GM13976 (cell line): ENCODE measurements at regions of chrX and their contacts with region 1.

Region 1: DNA sequence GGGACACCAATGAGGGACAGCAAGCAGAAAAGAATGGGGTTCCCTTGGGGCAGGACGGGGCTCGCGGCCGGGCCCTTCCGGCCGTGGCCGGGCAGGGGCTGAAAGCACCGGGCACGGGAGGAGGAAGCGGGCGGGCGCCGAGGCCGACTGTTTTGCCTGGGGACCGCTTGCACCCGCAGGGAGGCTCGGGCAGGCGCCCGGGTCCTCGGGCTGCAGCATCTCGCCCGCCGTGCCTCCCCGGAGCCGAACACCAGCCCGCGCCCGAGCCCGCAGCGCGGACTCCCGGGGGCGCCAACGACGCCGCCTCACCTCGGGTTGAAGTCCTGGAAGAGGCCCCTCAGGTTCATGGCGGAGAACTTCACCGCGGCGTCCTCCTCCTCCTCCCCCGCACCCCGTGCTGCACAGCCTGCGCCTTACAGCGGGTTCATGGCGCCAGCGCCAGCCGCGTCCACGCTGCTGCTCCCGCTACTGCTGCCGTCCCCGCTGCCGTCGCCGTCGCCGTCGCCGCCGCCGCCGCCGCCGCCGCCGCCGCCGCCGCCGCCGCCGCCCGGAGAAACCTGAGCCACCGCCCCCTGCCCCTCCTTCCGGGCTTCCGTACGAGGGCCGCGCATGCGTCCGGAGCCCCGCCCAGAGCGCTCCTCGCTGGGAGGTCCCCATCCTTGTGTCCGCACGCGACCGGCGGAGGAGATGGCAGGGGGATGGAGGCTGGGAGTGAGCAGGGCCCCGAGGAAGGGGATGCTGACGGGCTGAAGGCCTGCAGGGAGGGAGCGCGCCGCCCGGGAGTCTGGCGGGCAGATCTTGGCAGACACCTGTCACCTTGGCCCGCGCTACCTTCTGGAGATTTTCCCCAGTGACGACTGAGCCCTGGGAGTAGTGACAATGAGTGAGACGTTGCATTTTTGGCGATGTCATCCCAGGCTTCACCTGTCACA is at the start of gene TMEM185A:
- DNase-seq: peak; percentile 85
- CTCF ChIP-seq: no peak

Region 2: DNA sequence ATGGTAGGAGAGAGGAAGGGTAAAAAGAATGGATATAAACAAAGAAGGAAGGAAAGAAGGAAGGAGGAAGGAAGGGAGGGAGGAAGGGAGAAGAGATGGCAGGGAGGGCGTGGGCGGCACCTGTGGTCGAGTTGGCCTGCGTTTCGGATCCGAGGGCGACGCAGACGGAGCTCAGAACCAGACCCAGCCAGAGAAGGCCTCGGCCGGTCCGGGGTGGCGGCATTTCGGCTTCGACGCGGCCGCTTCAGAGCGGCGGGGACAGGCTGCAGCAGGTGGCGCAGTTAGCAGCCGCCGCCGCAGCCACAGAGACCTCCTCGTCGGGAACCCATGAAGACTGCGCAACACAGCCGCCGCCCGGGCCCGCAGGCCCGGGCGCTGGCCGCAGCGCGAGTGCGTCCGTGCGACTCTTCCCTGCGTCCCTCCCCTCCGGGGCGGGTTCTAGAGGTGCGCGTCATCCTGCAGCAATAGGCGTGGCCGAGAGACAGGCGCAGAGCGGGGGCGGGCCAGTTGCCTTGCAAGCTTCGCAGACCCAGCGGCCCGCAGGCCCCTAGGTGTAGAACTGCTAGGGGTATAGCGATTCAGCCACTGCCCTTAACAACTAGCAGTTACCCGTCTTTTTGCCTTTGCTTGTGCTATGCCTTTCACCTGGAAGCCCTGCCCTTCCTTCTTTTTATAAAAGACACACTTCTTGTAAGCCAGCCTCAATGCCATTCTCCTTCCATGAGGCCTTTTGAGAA is 126.4 kb before region 1 on chrX and contains the start of gene IDS:
- in situ Hi-C with region 1: loop called (anchors 25 kb)
- DNase-seq: peak; percentile 87
- CTCF ChIP-seq: no peak

Region 3: GRCh38 chrX:149539283-149540130 is 92.0 kb before region 1 on chrX:
- in situ Hi-C with region 1: no loop called
- DNase-seq: peak; percentile 80
- CTCF ChIP-seq: no peak

Region 4: GRCh38 chrX:149799938-149800337 is 168.4 kb after region 1 on chrX:
- in situ Hi-C with region 1: loop called (anchors 25 kb)
- DNase-seq: no peak
- CTCF ChIP-seq: no peak